K562 (cell line): ENCODE measurements at regions of chr10 and their contacts with region 1.

Region 1: DNA sequence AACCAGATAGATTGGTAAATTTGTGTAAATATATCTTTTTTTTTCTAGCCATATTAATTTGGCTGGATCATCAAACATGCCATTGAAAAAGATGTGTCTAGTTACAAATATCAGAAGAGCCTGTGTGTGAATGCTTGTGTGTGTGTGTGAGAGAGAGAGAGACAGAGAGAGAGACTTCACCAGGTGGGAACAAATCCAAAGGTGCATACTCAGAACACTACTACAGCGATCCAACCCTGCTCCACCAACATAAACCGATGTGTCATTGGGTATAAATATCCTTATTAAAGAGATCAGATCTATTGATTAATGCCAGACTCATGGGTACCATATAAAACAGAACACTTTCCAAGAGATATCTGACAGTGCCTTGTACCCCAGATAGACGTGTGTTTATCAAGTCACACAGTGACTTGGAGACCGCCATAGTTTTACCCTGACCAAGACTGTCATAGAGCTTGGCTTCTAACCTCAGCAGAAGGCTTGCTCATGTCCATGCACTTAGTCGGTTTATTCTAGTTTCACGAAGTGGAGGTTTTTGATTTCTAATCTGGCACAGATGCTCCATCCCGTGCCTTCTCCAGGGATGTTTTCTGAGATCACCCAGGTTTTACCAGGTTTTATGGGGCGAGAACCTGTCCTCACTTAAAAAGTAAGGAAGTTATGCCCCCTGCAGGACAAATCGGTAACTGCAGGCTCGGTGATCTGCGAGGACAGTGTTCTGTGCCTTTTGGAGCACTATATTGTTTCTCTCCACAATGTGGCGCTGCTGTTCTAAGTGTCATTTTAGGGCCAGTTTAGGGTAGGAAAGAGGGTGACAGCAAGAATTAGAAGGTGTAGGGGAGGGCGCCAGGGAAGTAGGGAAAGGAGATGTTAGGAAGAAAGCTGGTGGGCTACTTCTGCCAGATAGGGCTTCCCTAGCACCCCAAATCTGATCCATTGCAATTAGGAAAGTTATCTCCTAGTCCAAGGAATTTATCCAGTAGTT is 29.3 kb upstream of the WNT8B start:
- DNase-seq: peak; percentile 67 to 92 (median 72)
- ATAC-seq: peak; percentile 94
- H3K4me3 ChIP-seq: no peak overlapping the region
- H3K27ac ChIP-seq: no peak overlapping the region
- H3K4me1 ChIP-seq: peaks cover 0 to 2% of the 10 kb centered on the region in 2 experiments; a peak in 1 of 5 replicates
- H3K27me3 ChIP-seq: no peaks in the 10 kb centered on the region
- CTCF ChIP-seq: peak; percentile 98 to 99 (median 99)
- EP300 ChIP-seq: no peak
- POLR2A ChIP-seq: no peak
- RAD21 ChIP-seq: peak; percentile 99

Region 2: GRCh38 chr10:99845837-99846382 is 587.6 kb before region 1 on chr10:
- CTCF ChIA-PET with region 1: interaction called, 4 read pairs
- POLR2A ChIA-PET with region 1: no interaction called
- in situ Hi-C with region 1: no loop called
- intact Hi-C with region 1: loop called (anchors 10 kb)
- DNase-seq: peak; percentile 38 to 80 (median 44)
- ATAC-seq: peak; percentile 94
- H3K4me3 ChIP-seq: no peak overlapping the region
- H3K27ac ChIP-seq: no peak overlapping the region
- H3K4me1 ChIP-seq: no peaks in the 10 kb centered on the region
- H3K27me3 ChIP-seq: peaks cover 10 to 40% of the 10 kb centered on the region in 2 experiments; a peak in 4 of 5 replicates
- CTCF ChIP-seq: peak; percentile 72 to 87 (median 82)
- EP300 ChIP-seq: no peak
- POLR2A ChIP-seq: no peak
- RAD21 ChIP-seq: peak; percentile 84 to 90

Region 3: DNA sequence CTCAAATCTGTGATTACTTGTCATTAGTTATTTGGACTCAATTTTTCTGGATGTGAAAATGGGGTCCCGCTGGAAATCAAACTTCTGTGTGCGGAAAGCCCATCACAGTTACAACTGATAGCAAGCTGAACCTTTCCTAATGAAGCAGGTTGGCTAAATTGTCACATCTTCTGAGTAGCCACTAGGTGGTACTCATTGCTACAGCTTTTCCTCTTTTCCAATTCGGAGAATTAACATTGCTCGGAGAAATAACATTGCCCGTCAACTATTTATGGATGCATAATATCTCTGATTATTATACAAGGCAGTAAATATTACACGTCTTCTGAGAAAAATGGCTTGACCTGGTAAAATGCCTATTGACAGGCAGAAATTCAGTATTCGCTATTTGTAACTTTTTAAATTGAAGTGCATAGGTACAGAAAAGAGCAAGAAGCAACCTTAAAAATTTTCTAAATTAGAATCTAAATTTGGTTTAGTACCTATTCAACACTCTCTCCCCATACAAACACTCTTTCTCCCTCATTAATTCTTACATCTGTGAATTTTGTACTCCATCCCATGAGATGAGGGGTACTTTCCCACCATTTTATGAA is 129.7 kb before region 1 on chr10:
- CTCF ChIA-PET with region 1: interaction called, 38 read pairs
- POLR2A ChIA-PET with region 1: no interaction called
- in situ Hi-C with region 1: no loop called
- intact Hi-C with region 1: loop called (anchors 1 kb)
- DNase-seq: peak; percentile 23 to 36 (median 31)
- ATAC-seq: peak; percentile 64; the same call in 2 of the 3 replicates
- H3K4me3 ChIP-seq: no peak overlapping the region
- H3K27ac ChIP-seq: no peak overlapping the region
- H3K4me1 ChIP-seq: no peaks in the 10 kb centered on the region; a peak in 1 of 5 replicates
- H3K27me3 ChIP-seq: peaks cover 9 to 14% of the 10 kb centered on the region in 2 experiments; a peak in 4 of 5 replicates
- CTCF ChIP-seq: peak; percentile 56 to 70 (median 65); a peak in 5 of 6 replicates
- EP300 ChIP-seq: no peak
- POLR2A ChIP-seq: no peak
- RAD21 ChIP-seq: peak; percentile 25 to 63; a peak in 3 of 4 replicates

Region 4: GRCh38 chr10:100338434-100339036 is 95.0 kb before region 1 on chr10:
- CTCF ChIA-PET with region 1: interaction called, 89 read pairs
- POLR2A ChIA-PET with region 1: no interaction called
- in situ Hi-C with region 1: loop called (anchors 5 kb)
- intact Hi-C with region 1: loop called (anchors 1 kb)
- DNase-seq: peak; percentile 66 to 78 (median 68)
- ATAC-seq: peak; percentile 84
- H3K4me3 ChIP-seq: no peak overlapping the region
- H3K27ac ChIP-seq: no peak overlapping the region
- H3K4me1 ChIP-seq: peaks cover 0 to 14% of the 10 kb centered on the region in 2 experiments; a peak in 3 of 5 replicates
- H3K27me3 ChIP-seq: peaks cover 0 to 3% of the 10 kb centered on the region in 2 experiments; a peak in 2 of 5 replicates
- CTCF ChIP-seq: peak; percentile 83 to 89 (median 86)
- EP300 ChIP-seq: no peak
- POLR2A ChIP-seq: no peak
- RAD21 ChIP-seq: peak; percentile 77 to 89

Region 5: DNA sequence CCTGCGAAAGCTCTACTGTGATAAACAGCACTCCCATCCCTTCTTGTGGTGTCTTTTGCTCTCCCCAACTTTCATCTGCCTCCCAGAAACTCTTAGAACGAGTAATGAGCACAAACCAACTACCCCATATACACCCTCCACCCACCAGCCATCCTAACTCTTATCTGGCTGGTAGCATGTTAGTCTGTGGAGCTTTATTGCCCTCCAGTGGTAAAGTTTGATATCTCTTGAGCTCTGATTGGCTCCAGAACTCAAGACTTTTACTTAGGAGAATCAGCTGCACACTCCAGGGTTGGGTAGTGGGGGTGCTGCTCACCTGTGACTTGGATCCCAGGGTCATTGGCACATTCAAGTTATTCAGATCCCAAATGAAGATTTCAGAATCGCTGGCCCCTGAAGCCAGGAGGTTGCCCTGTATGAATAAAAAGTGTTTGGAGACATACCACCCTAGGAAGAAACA is 75.2 kb after region 1 on chr10:
- CTCF ChIA-PET with region 1: interaction called, 44 read pairs
- POLR2A ChIA-PET with region 1: no interaction called
- in situ Hi-C with region 1: loop called (anchors 5 kb)
- intact Hi-C with region 1: loop called (anchors 1 kb)
- DNase-seq: peak; percentile 48 to 65 (median 62)
- ATAC-seq: peak; percentile 98
- H3K4me3 ChIP-seq: no peak overlapping the region
- H3K27ac ChIP-seq: no peak overlapping the region
- H3K4me1 ChIP-seq: peaks cover 0 to 4% of the 10 kb centered on the region in 2 experiments; a peak in 2 of 5 replicates
- H3K27me3 ChIP-seq: no peaks in the 10 kb centered on the region
- CTCF ChIP-seq: peak; percentile 67 to 78 (median 74)
- EP300 ChIP-seq: no peak
- POLR2A ChIP-seq: no peak
- RAD21 ChIP-seq: peak; percentile 65 to 80

Region 6: GRCh38 chr10:100518761-100519241 is 85.3 kb after region 1 on chr10:
- CTCF ChIA-PET with region 1: interaction called, 25 read pairs
- POLR2A ChIA-PET with region 1: no interaction called
- in situ Hi-C with region 1: no loop called
- intact Hi-C with region 1: no loop called
- DNase-seq: peak; percentile 43 to 63 (median 48)
- ATAC-seq: peak; percentile 78
- H3K4me3 ChIP-seq: no peak overlapping the region
- H3K27ac ChIP-seq: no peak overlapping the region
- H3K4me1 ChIP-seq: peaks cover 2 to 3% of the 10 kb centered on the region in 2 experiments; a peak in 2 of 5 replicates
- H3K27me3 ChIP-seq: no peaks in the 10 kb centered on the region
- CTCF ChIP-seq: peak; percentile 61 to 73 (median 69)
- EP300 ChIP-seq: no peak
- POLR2A ChIP-seq: no peak
- RAD21 ChIP-seq: peak; percentile 37 to 62; a peak in 3 of 4 replicates